ENCODE measurements at regions of chrX and their contacts with region 1.

Region 1: DNA sequence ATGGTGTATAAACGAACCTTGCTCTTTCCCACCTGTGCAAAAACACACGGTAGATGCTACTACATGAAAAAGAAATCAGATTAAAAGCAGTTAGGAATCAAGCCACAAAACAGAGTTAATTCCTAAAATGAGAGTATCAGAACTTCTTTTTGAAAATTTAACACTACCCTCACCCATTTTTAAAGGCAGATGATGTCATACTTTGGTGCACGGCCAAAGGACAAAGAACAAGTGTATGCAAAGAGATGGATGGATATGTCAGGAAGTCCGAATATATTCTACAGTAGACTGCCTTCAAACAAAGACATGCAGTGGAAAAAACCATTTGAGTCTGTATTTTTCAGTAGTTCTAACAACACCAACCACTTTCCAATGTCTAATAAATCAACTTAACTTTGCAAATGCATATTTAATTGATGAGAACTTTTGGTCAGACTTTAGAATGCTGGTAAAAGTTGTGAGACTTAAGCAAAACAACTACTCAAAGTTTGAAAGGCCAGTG is 2.2 kb downstream of the AIFM1 start:
- DNase-seq: no peak
- ATAC-seq: no peak

Region 2: DNA sequence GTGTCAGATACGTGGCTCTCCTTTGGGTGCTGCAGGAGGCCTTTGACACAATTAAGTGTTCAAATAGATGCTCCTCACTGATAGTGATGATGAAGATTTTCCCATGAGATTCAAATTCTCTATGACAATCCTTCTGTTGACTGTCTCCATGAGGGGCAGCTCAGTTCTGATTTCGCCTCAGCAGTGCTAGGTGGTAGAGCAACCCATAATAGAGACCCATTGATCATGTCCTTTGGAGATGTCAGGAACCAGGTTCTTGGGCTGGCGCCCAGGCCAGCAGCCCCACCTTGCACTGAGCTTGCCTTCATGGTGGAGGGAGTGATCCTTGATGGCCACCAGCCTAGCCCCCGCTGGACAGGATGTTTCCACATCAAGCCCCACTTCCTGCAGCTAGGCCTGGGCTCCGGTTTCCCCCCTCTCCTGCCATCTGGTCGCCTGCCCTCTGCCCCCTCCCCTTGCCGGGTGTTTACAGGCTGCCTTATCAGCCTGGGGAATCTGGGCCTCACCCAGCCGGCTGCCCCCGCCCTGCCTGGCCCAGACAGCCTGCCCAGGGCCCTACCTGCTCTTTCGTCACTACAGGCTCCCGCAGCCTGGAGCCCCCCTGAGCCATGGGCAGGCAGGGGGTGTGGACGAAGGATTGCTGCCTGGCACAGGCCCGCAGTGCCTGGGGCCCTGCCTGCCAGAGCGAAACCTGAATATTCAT is 65.7 kb before region 1 on chrX:
- intact Hi-C with region 1: no loop called
- DNase-seq: no peak
- ATAC-seq: peak; percentile 28 to 39

Region 3: GRCh38 chrX:130120746-130121504 is 42.5 kb before region 1 on chrX:
- intact Hi-C with region 1: loop called in 1 of 2 experiments (anchors 5 kb)
- DNase-seq: peak; percentile 80
- ATAC-seq: peak; percentile 81

Region 4: GRCh38 chrX:130245441-130245840 is 82.0 kb after region 1 on chrX:
- intact Hi-C with region 1: no loop called
- DNase-seq: no peak
- ATAC-seq: no peak

Measured in left cardiac atrium (tissue), 4 donors.